MCF 10A (cell line): ENCODE measurements at regions of chr7 and their contacts with region 1.

Region 1: DNA sequence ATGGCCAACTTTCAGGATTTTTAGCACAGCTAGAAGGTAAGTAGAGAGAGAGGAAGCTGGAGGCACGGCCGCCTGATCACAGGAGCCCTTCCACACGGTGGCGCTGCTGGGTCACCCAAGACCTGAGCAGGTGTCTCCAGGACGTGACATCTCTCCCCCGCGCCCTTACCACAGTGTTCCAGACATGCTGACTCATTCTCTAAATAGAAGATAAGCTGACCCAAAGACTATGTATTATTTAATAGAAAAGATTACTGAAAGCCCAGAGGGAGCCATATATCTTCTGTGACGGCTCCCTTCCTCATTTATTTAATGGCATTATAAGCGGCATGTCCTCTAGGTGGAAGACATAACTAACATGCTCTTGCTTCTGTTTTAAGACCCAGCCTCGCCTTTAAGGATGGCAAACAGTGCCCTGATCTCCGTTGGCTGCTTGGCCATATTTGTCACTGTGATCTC is 26.0 kb upstream of the MALSU1 start:
- DNase-seq: peak; percentile 95
- H3K4me3 Mint-ChIP-seq: peak overlapping the region; percentile 18
- H3K27ac Mint-ChIP-seq: no peak overlapping the region
- H3K4me1 Mint-ChIP-seq: peaks cover 6% of the 10 kb centered on the region
- H3K27me3 Mint-ChIP-seq: no peaks in the 10 kb centered on the region
- CTCF ChIP-seq: peak; percentile 84

Region 2: GRCh38 chr7:23181684-23182553 is 91.3 kb before region 1 on chr7 and contains the start of gene NUP42:
- CTCF ChIA-PET with region 1: interaction called, 38 read pairs
- POLR2A ChIA-PET with region 1: no interaction called
- intact Hi-C with region 1: no loop called
- DNase-seq: peak; percentile 98
- H3K4me3 Mint-ChIP-seq: peak within 1 kb of the TSS; percentile 90
- H3K27ac Mint-ChIP-seq: peak within 1 kb of the TSS; percentile 96
- H3K4me1 Mint-ChIP-seq: peaks cover 17% of the 10 kb centered on the region
- H3K27me3 Mint-ChIP-seq: no peaks in the 10 kb centered on the region
- CTCF ChIP-seq: no peak
- total RNA-seq, gene NUP42: 41.3 and 42.0 TPM in 2 replicates

Region 3: GRCh38 chr7:23232966-23233365 is 40.2 kb before region 1 on chr7:
- CTCF ChIA-PET with region 1: no interaction called
- POLR2A ChIA-PET with region 1: no interaction called
- intact Hi-C with region 1: no loop called
- DNase-seq: no peak
- H3K4me3 Mint-ChIP-seq: no peak overlapping the region
- H3K27ac Mint-ChIP-seq: no peak overlapping the region
- H3K4me1 Mint-ChIP-seq: peaks cover 7% of the 10 kb centered on the region
- H3K27me3 Mint-ChIP-seq: no peaks in the 10 kb centered on the region
- CTCF ChIP-seq: no peak

Region 4: DNA sequence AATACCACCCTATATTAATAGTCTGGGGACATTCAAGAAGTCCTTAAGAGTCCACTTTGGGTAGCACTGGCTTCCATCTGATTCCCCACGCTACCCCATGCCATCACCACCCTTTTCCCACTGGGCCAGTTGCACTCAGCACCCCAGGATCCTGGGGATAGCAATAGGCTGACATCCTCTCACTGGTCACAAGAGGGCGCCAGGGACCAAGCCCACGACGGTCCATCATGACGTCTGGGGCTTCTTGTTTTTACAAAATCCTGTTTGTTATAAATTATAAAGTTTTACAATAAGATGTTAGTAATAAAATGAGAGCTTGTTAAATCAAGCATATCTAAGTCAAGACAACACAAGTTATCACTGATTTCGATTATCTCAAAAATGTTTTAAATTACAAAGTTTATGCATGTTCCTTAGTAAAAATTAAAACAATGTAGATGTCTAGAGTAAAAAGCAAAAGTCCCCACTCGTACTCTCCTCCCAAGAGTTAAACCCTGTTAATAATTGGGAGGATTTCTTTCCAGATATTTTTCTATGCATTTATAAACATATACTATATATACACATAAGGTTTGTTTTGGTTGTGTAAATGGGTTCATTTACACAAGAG is 11.2 kb before region 1 on chr7:
- CTCF ChIA-PET with region 1: interaction called, 99 read pairs
- POLR2A ChIA-PET with region 1: interaction called, 3 read pairs
- intact Hi-C with region 1: no loop called
- DNase-seq: peak; percentile 75
- H3K4me3 Mint-ChIP-seq: no peak overlapping the region
- H3K27ac Mint-ChIP-seq: no peak overlapping the region
- H3K4me1 Mint-ChIP-seq: no peaks in the 10 kb centered on the region
- H3K27me3 Mint-ChIP-seq: no peaks in the 10 kb centered on the region
- CTCF ChIP-seq: peak; percentile 83

Region 5: GRCh38 chr7:23357190-23358093 is 84.3 kb after region 1 on chr7:
- CTCF ChIA-PET with region 1: interaction called, 24 read pairs
- POLR2A ChIA-PET with region 1: interaction called, 3 read pairs
- intact Hi-C with region 1: loop called (anchors 1 kb)
- DNase-seq: peak; percentile 74
- H3K4me3 Mint-ChIP-seq: peak overlapping the region; percentile 41
- H3K27ac Mint-ChIP-seq: peak overlapping the region; percentile 35
- H3K4me1 Mint-ChIP-seq: peaks cover 14% of the 10 kb centered on the region
- H3K27me3 Mint-ChIP-seq: no peaks in the 10 kb centered on the region
- CTCF ChIP-seq: peak; percentile 52

Region 6: DNA sequence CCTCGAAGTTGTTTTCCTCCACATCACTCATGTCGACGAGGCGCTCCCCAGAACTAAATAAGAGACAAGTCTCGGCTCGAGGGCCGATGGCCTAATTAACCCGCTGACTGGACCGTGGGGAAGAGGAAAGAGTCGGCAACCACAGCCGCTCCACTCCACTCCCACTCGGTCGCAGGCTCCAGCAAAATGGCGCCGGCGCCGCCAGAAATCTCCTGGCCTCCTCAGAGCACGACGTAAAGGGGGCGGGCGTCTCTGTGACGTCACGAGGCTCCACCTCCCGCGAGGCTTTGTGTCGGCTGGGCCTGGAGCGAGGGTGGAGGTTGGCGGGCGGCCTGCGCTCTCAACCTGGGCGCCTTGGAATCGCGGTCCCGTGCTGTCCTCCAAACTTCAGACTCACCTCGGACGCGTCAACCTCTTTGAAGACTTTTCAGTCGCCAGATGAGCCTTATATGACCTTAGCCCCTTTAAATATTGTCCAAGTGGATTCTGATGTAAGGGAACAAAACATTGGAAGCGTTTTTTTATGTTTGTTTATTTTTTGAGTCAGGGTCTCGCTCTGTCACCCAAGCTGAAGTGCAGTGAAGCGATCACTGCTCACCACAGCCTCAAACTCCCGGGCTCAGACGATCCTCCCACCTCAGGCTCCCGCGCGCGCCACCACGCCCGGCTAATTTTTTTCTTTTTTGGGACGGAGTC is 258.8 kb after region 1 on chr7 and contains the start of gene TRA2A:
- CTCF ChIA-PET with region 1: interaction called, 4 read pairs
- POLR2A ChIA-PET with region 1: interaction called, 7 read pairs
- intact Hi-C with region 1: loop called (anchors 5 kb)
- DNase-seq: peak; percentile 96
- H3K4me3 Mint-ChIP-seq: peak within 1 kb of the TSS; percentile 95
- H3K27ac Mint-ChIP-seq: peak within 1 kb of the TSS; percentile 100
- H3K4me1 Mint-ChIP-seq: peaks cover 17% of the 10 kb centered on the region
- H3K27me3 Mint-ChIP-seq: no peaks in the 10 kb centered on the region
- CTCF ChIP-seq: no peak
- total RNA-seq, gene TRA2A: 92.9 and 113 TPM in 2 replicates

Region 7: DNA sequence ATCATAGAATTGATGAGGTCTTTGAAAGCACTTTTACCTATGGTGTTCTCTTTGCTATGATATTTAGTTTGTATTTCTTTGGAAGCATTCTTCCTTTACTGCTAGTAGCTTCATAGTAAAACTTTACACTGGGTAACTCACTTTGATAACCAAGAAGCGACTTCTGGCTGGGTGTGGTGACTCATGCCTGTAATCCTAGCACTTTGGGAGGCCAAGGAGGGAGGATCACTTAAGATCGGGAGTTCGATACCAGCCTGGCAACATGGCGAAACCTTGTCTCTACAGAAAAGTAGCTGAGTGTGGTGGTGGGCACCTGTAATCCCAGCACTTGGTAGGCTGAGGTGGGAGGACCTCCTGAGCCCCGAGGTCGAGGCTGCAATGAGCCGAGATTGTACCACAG is 360.2 kb after region 1 on chr7:
- CTCF ChIA-PET with region 1: no interaction called
- POLR2A ChIA-PET with region 1: no interaction called
- intact Hi-C with region 1: no loop called
- DNase-seq: no peak
- H3K4me3 Mint-ChIP-seq: no peak overlapping the region
- H3K27ac Mint-ChIP-seq: no peak overlapping the region
- H3K4me1 Mint-ChIP-seq: no peaks in the 10 kb centered on the region
- H3K27me3 Mint-ChIP-seq: no peaks in the 10 kb centered on the region
- CTCF ChIP-seq: no peak

Region 8: DNA sequence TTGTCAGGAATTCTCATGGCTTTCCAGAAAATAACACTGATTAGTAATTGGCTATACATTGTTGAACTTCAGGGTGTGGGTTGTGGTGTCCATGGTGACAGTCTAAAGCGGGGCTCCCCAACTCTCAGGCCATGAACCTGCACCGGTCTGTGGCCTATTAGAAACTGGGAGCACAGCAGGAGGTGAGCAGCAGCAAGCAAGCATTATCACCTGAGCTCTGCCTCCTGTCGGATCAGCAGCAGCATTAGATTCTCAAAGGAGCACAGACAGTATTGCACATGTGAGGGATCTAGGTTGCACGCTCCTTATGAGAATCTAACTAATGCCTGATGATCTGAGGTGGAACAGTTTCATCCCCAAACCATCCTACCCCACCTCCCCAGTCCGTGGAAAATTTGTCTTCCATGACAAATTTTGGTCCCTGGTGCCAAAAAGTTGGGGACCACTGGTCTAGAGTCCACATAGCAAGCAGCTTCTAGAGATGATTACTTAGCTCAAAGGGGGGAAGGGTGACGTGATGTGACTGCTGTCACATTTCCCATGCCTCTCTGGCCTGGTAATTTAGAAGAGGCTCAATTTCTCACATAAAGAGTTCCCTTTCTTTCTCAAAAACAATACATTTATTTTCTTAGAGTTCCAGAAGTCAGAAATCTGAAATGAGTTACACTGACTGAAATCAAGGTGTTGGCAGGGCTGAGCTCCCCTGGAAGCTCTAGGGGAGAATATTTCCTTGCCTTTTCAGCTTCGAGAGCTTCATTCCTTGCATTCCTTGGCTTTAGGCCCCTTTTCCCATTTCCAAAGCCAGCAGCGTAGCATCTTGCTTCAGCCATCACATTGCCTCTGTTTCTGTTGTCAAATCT is 389.2 kb after region 1 on chr7:
- CTCF ChIA-PET with region 1: no interaction called
- POLR2A ChIA-PET with region 1: no interaction called
- intact Hi-C with region 1: no loop called
- DNase-seq: no peak
- H3K4me3 Mint-ChIP-seq: no peak overlapping the region
- H3K27ac Mint-ChIP-seq: no peak overlapping the region
- H3K4me1 Mint-ChIP-seq: no peaks in the 10 kb centered on the region
- H3K27me3 Mint-ChIP-seq: no peaks in the 10 kb centered on the region
- CTCF ChIP-seq: no peak

Region 9: DNA sequence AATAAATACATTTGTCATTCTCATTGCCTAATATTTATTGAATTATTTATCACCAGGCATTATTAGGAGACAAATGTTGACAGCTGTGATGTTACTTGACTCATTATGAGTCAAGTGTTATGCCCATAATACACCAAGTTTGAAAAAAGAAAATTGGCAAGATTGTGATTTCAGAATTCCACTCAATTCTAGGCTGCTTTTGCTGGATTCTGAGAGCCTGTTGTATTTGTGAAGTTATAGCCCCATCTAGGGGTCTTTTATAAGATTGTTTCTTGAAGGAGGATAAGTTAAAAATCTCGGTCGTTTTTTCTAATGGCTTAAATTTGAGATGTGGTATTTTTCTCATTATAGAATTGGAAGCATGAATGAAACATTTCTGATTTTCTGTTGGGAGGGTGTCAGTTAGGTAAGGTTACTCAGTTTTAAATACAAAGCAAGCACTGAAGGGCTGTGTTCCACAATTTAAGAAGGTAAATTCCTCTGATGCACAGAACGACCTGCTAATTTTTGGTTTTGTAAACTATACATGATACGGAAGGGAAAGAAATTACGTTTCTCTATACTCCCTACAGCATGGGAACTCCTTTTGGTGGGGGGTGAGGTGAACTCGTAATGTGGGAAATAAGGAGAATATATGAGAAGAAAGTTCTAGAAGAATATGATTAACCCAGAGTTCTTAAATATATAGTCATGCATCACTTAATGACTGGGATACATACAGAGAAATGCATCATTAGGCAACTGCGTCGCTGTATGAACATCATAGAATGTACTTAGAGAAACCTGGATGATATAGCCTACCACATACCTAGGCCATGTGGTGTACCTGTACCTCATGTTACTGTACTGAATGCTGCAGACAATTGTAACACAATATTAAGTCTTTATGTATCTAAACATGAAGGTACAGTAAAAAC is 439.5 kb after region 1 on chr7:
- CTCF ChIA-PET with region 1: interaction called, 7 read pairs
- POLR2A ChIA-PET with region 1: no interaction called
- intact Hi-C with region 1: loop called (anchors 1 kb)
- DNase-seq: peak; percentile 69
- H3K4me3 Mint-ChIP-seq: no peak overlapping the region
- H3K27ac Mint-ChIP-seq: peak overlapping the region; percentile 27
- H3K4me1 Mint-ChIP-seq: peaks cover 17% of the 10 kb centered on the region
- H3K27me3 Mint-ChIP-seq: no peaks in the 10 kb centered on the region
- CTCF ChIP-seq: peak; percentile 52